ENCODE measurements at regions of chr15 and their contacts with region 1.

Region 1: GRCh38 chr15:57861036-57861638 is 154.6 kb downstream of the POLR2M start:
- DNase-seq: no peak
- H3K4me3 ChIP-seq: no peak overlapping the region
- H3K27ac ChIP-seq: no peak overlapping the region
- H3K4me1 ChIP-seq: no peaks in the 10 kb centered on the region
- H3K27me3 ChIP-seq: peaks cover 0 to 8% (median 0%) of the 10 kb centered on the region in 4 donors
- CTCF ChIP-seq: peak; percentile 63 to 85 (median 72)
- POLR2A ChIP-seq: no peak

Region 2: DNA sequence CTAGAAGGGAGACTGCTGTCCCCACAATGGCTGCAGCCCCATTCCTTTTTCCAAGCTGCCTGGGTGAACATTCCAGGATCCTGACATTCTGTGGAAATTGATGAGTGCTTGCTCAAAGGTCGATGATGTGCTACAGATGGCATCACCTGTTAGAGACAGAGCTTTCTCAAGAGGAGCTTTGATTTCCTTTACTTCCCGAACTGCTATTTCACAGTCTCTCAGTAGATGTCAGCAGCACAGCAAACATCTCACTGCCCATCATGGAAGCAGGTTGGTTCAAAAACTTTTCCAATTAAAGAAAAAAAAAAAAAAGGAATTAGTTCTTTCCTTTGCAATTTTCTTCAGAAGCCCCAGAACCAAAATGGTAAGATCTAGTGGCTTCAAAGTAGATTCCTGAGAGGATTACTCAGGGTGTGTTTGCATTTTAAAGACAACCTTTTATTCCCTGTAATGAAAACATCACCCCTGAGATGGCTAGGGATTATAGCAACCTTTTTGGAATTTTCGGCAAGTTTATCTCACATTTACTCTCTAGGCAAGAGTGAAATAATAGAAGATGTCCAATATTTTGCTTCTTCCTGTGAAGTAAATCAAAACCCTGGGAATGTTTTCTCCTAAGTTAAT is 109.8 kb before region 1 on chr15:
- intact Hi-C with region 1: loop called (anchors 5 kb)
- DNase-seq: no peak
- H3K4me3 ChIP-seq: no peak overlapping the region
- H3K27ac ChIP-seq: no peak overlapping the region
- H3K4me1 ChIP-seq: peaks cover 0 to 7% (median 0%) of the 10 kb centered on the region in 3 donors
- H3K27me3 ChIP-seq: no peaks in the 10 kb centered on the region
- CTCF ChIP-seq: peak in 5 of 6 experiments; percentile 13 to 45 (median 15)
- POLR2A ChIP-seq: no peak

Region 3: DNA sequence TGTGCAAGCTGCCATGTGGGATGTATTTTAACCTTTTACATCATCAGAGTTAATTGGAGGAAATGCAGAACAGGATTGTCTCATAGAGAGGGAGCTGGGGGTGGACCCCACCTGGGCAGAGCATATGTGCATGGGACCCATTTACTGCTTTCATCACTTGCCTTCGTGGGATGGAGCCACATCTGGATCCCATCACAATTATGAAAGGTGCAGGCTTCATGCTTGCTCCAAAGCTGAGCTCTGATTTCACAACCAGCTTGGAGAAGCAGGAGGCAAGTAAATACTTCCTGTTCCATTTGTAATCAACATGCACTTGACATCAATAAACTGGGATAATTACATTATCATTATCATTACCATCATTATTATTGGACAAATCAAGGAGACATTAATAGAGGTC is 42.5 kb after region 1 on chr15:
- intact Hi-C with region 1: no loop called
- DNase-seq: no peak
- H3K4me3 ChIP-seq: no peak overlapping the region
- H3K27ac ChIP-seq: no peak overlapping the region
- H3K4me1 ChIP-seq: no peaks in the 10 kb centered on the region
- H3K27me3 ChIP-seq: no peaks in the 10 kb centered on the region
- CTCF ChIP-seq: no peak
- POLR2A ChIP-seq: no peak

Measured in esophagus squamous epithelium (tissue), 5 donors.